HAP-1 (cell line): ENCODE measurements at regions of chr13 and their contacts with region 1.

Region 1: GRCh38 chr13:112324120-112324519 is 52.0 kb upstream of the SPACA7 start:
- DNase-seq: no peak
- H3K4me3 ChIP-seq: no peak overlapping the region
- H3K4me1 ChIP-seq: no peaks in the 10 kb centered on the region
- H3K27me3 ChIP-seq: peaks cover 11% of the 10 kb centered on the region

Region 2: DNA sequence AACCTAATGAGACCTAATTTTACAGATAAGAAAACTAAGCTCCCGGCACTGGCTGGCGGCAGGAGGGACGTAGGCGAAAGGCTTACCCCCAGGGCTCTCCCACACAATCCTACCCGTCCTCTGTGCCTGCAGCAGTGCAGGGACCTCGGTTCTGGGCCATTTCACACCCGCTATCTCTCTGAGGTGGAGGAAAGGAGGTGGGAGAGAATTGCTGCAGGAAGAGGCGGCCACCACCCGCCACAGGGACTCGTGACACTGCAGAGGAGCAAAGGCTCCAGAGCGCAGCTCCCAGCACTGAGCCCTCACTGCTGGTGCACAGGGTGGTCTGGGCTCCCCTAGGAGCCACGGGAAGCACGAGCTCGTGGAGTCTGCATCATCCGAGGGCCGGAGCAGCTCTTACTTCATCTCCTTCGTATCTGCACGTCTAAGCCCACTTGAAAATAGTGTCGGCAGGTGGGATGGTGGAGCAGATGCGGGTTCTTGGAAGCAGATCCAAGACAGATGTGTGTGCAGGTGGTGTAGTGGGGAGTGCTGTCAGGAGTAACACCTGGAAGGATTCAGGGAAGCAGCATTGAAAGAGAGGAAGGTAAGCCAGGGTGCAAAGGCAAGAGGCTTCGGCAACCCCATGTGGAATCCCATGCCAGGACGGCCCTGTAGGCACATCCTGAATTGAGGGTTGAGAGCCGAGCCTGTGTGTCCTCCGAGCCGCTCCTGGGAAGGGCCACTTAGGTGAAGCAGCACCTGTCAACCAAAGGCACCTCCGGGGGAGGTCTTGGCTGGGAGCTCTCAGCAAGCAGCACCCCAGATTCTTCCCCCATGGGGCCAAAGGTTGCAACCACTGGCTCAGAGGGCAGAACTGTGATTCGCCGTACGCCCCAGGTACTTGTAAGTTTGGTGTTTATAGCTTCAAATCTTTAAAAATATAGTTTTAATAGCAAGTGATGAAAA is 63.7 kb before region 1 on chr13:
- in situ Hi-C with region 1: loop called (anchors 10 kb)
- DNase-seq: no peak
- H3K4me3 ChIP-seq: no peak overlapping the region
- H3K4me1 ChIP-seq: no peaks in the 10 kb centered on the region
- H3K27me3 ChIP-seq: no peaks in the 10 kb centered on the region; the same call in 1 of the 2 replicates

Region 3: DNA sequence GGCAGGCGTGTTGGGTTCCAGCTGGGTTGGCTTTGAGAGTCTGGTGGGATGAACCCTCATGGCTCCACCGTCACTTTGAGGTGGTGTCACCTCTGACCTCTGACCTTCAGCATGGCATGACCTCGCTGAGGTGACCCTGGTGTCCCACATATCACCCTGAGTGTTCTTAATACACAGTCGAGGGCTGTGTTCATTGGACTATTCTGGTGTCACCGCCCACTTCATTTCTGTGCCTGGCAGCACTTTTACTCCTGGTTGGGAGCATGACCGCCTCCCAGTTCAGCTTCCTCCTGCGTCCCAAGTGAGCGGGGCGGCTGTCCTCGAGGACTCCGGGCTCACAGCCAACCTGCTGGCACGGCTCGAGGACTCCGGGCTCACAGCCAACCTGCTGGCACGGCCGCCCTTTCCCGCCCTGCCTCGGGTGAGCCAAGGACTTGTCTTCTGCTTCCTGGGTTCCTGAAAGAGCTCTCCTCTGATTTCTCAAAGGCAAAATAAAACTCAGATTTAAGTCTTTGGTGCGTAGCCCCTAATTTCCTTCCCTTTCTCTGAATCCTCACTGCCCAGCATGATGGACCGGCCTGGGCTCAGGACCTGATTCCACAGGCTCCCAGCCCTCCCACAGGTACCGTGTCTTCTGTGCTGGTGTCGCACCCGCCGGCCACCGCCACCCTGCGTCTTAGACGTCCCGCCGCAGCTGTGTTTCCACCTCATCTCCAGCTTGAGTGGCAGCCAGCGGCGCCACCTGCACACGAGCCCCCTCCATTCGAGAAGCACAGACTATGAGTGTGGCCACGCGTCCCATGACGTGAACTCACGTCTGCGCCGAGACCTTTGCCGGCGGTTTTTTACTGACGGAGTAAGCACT is 1323.5 kb after region 1 on chr13:
- in situ Hi-C with region 1: no loop called
- DNase-seq: no peak
- H3K4me3 ChIP-seq: no peak overlapping the region
- H3K4me1 ChIP-seq: no peaks in the 10 kb centered on the region
- H3K27me3 ChIP-seq: no peaks in the 10 kb centered on the region